SK-N-SH (cell line): ENCODE measurements at regions of chrX and their contacts with region 1.

Region 1: GRCh38 chrX:110125446-110126162 is 122.7 kb downstream of the TMEM164 start:
- DNase-seq: peak; percentile 24
- H3K4me3 ChIP-seq: no peak overlapping the region
- H3K27ac ChIP-seq: peak overlapping the region in 1 of 2 experiments; percentile 17; a peak in 2 of 4 replicates
- H3K4me1 ChIP-seq: peaks cover 0 to 9% of the 10 kb centered on the region in 2 experiments; a peak in 1 of 4 replicates
- H3K27me3 ChIP-seq: no peaks in the 10 kb centered on the region
- CTCF ChIP-seq: peak; percentile 36
- EP300 ChIP-seq: no peak
- RAD21 ChIP-seq: peak; percentile 59

Region 2: DNA sequence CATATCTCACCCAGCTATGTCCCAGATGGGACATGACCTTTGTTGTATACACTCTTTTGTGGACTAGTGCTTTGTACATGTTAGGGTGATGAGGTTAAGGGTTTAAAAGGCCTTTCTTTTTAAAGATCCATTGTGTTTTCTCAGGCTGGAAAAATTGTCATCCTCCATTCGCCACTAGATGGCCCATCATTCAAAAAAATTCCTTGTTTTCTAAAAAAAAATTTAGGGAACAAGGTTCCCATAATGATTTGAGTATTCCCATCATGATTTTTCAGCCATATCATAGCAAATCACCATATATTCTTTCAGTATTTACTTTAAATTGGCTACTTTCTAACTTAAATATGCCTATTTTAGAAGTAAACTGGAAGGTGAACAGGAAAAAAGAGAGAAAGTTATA is 214.6 kb before region 1 on chrX:
- CTCF ChIA-PET with region 1: interaction called, 20 read pairs
- POLR2A ChIA-PET with region 1: no interaction called
- DNase-seq: peak; percentile 21
- H3K4me3 ChIP-seq: no peak overlapping the region
- H3K27ac ChIP-seq: no peak overlapping the region
- H3K4me1 ChIP-seq: no peaks in the 10 kb centered on the region
- H3K27me3 ChIP-seq: no peaks in the 10 kb centered on the region; the same call in 1 of the 2 replicates
- CTCF ChIP-seq: peak; percentile 69
- EP300 ChIP-seq: no peak
- RAD21 ChIP-seq: peak; percentile 65

Region 3: GRCh38 chrX:110135618-110136017 is 10.0 kb after region 1 on chrX:
- CTCF ChIA-PET with region 1: no interaction called
- POLR2A ChIA-PET with region 1: no interaction called
- DNase-seq: no peak
- H3K4me3 ChIP-seq: no peak overlapping the region
- H3K27ac ChIP-seq: no peak overlapping the region
- H3K4me1 ChIP-seq: peaks cover 0 to 7% of the 10 kb centered on the region in 2 experiments; a peak in 1 of 4 replicates
- H3K27me3 ChIP-seq: no peaks in the 10 kb centered on the region; the same call in 1 of the 2 replicates
- CTCF ChIP-seq: no peak
- EP300 ChIP-seq: no peak
- RAD21 ChIP-seq: no peak

Region 4: GRCh38 chrX:111013778-111014455 is 888.3 kb after region 1 on chrX:
- CTCF ChIA-PET with region 1: no interaction called
- POLR2A ChIA-PET with region 1: no interaction called
- DNase-seq: no peak
- H3K4me3 ChIP-seq: no peak overlapping the region
- H3K27ac ChIP-seq: no peak overlapping the region
- H3K4me1 ChIP-seq: peaks cover 0 to 3% of the 10 kb centered on the region in 2 experiments; a peak in 1 of 4 replicates
- H3K27me3 ChIP-seq: no peaks in the 10 kb centered on the region
- CTCF ChIP-seq: no peak
- EP300 ChIP-seq: no peak
- RAD21 ChIP-seq: no peak